ENCODE measurements at regions of chr2 and their contacts with region 1.

Region 1: GRCh38 chr2:234500394-234501006 is 3.6 kb upstream of the ARL4C start:
- DNase-seq: peak; percentile 73 to 85 (median 78)
- H3K4me3 ChIP-seq: peak overlapping the region in 1 of 2 donors; percentile 9
- H3K4me3 Mint-ChIP-seq: peak overlapping the region; percentile 57 to 91 (median 83)
- H3K27ac ChIP-seq: peak overlapping the region; percentile 77
- H3K27ac Mint-ChIP-seq: peak overlapping the region; percentile 81 to 97 (median 94)
- H3K4me1 ChIP-seq: peaks cover 32% of the 10 kb centered on the region
- H3K4me1 Mint-ChIP-seq: peaks cover 26 to 41% (median 30%) of the 10 kb centered on the region in 4 donors
- H3K27me3 ChIP-seq: no peaks in the 10 kb centered on the region
- H3K27me3 Mint-ChIP-seq: no peaks in the 10 kb centered on the region

Region 2: GRCh38 chr2:233404222-233404621 is 1096.3 kb before region 1 on chr2:
- CTCF ChIA-PET with region 1: no interaction called
- POLR2A ChIA-PET with region 1: no interaction called
- intact Hi-C with region 1: loop called (anchors 5 kb)
- DNase-seq: peak; percentile 74 to 78 (median 75)
- H3K4me3 ChIP-seq: no peak overlapping the region
- H3K4me3 Mint-ChIP-seq: peak overlapping the region in 2 of 8 donors; percentile 1
- H3K27ac ChIP-seq: no peak overlapping the region
- H3K27ac Mint-ChIP-seq: peak overlapping the region; percentile 14 to 91 (median 77)
- H3K4me1 ChIP-seq: peaks cover 44% of the 10 kb centered on the region
- H3K4me1 Mint-ChIP-seq: peaks cover 40 to 77% (median 58%) of the 10 kb centered on the region in 4 donors
- H3K27me3 ChIP-seq: no peaks in the 10 kb centered on the region
- H3K27me3 Mint-ChIP-seq: no peaks in the 10 kb centered on the region

Region 3: DNA sequence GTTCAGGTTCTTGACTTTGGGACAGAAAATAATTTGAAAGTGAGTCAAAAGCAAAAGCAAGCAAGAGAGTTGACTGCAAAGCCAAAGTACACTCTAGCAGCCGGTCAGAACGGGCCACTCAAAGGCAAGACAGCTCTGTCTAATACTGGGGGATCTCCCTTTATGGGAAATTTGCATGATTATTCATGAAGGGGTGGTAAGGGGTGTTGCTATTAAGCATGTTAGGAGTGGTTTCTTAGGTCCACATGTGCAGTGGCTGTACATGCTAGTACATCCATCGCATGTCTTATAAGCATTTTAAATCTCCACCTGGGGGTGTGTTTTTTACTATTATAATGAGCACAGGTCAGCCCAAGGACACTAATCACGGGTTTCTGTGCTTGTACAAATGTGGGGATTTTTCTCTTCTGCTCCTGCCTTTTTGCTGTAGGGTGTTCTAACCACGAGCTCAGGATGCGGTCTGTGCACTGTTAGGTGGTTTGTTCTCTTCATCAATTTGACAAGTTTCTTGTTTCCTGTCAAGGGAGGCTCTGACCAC is 510.2 kb before region 1 on chr2:
- CTCF ChIA-PET with region 1: interaction called, 10 read pairs
- POLR2A ChIA-PET with region 1: interaction called, 34 read pairs
- intact Hi-C with region 1: loop called (anchors 5 kb)
- DNase-seq: peak; percentile 82 to 90 (median 87)
- H3K4me3 ChIP-seq: peak overlapping the region in 1 of 2 donors; percentile 16
- H3K4me3 Mint-ChIP-seq: peak overlapping the region in 7 of 8 donors; percentile 57 to 84 (median 64)
- H3K27ac ChIP-seq: peak overlapping the region; percentile 32
- H3K27ac Mint-ChIP-seq: peak overlapping the region; percentile 21 to 96 (median 87)
- H3K4me1 ChIP-seq: peaks cover 65% of the 10 kb centered on the region
- H3K4me1 Mint-ChIP-seq: peaks cover 47 to 70% (median 60%) of the 10 kb centered on the region in 4 donors
- H3K27me3 ChIP-seq: no peaks in the 10 kb centered on the region
- H3K27me3 Mint-ChIP-seq: no peaks in the 10 kb centered on the region

Region 4: GRCh38 chr2:234135720-234136221 is 364.7 kb before region 1 on chr2:
- CTCF ChIA-PET with region 1: interaction called, 100 read pairs
- POLR2A ChIA-PET with region 1: interaction called, 16 read pairs
- intact Hi-C with region 1: loop called (anchors 1 kb)
- DNase-seq: peak; percentile 31 to 51 (median 45)
- H3K4me3 ChIP-seq: no peak overlapping the region
- H3K4me3 Mint-ChIP-seq: peak overlapping the region in 4 of 8 donors; percentile 9 to 43 (median 27)
- H3K27ac ChIP-seq: no peak overlapping the region
- H3K27ac Mint-ChIP-seq: peak overlapping the region; percentile 16 to 78 (median 57)
- H3K4me1 ChIP-seq: peaks cover 28% of the 10 kb centered on the region
- H3K4me1 Mint-ChIP-seq: peaks cover 20 to 46% (median 28%) of the 10 kb centered on the region in 4 donors
- H3K27me3 ChIP-seq: no peaks in the 10 kb centered on the region
- H3K27me3 Mint-ChIP-seq: no peaks in the 10 kb centered on the region

Region 5: DNA sequence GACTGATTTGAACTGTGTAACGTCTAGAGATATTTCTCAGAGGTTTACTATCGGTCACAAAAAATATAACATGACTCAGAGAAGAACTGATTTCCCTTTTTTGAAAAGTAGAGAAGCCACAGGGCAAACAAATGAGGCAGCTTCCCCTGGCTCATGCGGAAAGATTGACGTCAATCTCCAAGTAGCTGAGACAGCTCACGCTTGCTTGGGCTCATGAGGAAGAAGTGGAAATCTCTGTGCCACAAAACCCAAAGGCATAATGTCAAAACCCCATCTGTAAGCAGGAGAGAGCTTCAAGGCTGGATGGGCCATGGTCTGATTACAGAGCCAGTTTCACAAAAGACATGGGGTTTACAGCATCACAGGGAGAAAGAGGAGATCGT is 191.7 kb before region 1 on chr2:
- CTCF ChIA-PET with region 1: interaction called, 3 read pairs
- POLR2A ChIA-PET with region 1: interaction called, 17 read pairs
- intact Hi-C with region 1: no loop called
- DNase-seq: peak; percentile 77 to 92 (median 83)
- H3K4me3 ChIP-seq: no peak overlapping the region
- H3K4me3 Mint-ChIP-seq: peak overlapping the region in 7 of 8 donors; percentile 56 to 91 (median 76)
- H3K27ac ChIP-seq: peak overlapping the region; percentile 56
- H3K27ac Mint-ChIP-seq: peak overlapping the region; percentile 86 to 99 (median 98)
- H3K4me1 ChIP-seq: peaks cover 32% of the 10 kb centered on the region
- H3K4me1 Mint-ChIP-seq: peaks cover 36 to 53% (median 43%) of the 10 kb centered on the region in 4 donors
- H3K27me3 ChIP-seq: no peaks in the 10 kb centered on the region
- H3K27me3 Mint-ChIP-seq: no peaks in the 10 kb centered on the region

Region 6: DNA sequence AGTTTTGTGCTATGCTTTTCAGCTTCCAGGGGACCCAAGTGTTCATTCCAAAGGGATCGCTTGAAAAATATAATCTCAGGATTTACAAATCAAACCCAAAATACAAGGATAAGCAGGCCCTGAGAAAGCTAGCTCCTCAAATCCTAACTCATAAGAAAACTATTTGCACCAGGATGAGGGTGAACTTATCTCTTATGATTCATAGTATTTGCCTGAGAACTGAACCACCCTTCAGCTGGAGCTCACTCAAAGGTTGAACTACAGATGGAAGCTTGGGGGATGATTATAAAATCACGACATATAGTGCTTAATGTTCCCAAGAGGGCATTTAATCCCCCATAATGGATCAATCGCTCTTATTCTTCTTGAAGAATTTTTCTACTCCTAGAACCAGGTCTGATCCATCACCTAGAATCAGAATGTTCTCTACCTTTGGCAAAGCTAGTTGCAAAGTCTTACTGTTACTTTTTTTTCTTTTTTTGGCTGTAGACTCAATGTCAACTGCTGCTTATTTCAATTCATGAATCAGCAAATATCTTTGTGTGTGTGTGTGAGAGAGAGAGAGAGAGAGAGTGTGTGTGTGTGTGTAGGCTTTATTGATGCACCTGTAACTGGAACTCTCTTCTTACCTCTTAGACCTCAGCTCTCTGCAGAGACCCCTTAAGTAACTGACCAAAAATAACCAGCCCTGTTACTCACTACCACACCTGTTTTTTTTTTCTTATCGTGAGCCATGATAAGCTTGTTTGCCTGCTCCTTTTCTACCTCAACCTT is 48.5 kb before region 1 on chr2:
- CTCF ChIA-PET with region 1: interaction called, 18 read pairs
- POLR2A ChIA-PET with region 1: interaction called, 859 read pairs
- intact Hi-C with region 1: no loop called
- DNase-seq: peak in 4 of 5 donors; percentile 38 to 65 (median 55)
- H3K4me3 ChIP-seq: peak overlapping the region; percentile 3 to 83
- H3K4me3 Mint-ChIP-seq: peak overlapping the region; percentile 64 to 97 (median 88)
- H3K27ac ChIP-seq: peak overlapping the region; percentile 90
- H3K27ac Mint-ChIP-seq: peak overlapping the region; percentile 72 to 99 (median 94)
- H3K4me1 ChIP-seq: peaks cover 91% of the 10 kb centered on the region
- H3K4me1 Mint-ChIP-seq: peaks cover 58 to 93% (median 74%) of the 10 kb centered on the region in 4 donors
- H3K27me3 ChIP-seq: no peaks in the 10 kb centered on the region
- H3K27me3 Mint-ChIP-seq: no peaks in the 10 kb centered on the region

Region 7: DNA sequence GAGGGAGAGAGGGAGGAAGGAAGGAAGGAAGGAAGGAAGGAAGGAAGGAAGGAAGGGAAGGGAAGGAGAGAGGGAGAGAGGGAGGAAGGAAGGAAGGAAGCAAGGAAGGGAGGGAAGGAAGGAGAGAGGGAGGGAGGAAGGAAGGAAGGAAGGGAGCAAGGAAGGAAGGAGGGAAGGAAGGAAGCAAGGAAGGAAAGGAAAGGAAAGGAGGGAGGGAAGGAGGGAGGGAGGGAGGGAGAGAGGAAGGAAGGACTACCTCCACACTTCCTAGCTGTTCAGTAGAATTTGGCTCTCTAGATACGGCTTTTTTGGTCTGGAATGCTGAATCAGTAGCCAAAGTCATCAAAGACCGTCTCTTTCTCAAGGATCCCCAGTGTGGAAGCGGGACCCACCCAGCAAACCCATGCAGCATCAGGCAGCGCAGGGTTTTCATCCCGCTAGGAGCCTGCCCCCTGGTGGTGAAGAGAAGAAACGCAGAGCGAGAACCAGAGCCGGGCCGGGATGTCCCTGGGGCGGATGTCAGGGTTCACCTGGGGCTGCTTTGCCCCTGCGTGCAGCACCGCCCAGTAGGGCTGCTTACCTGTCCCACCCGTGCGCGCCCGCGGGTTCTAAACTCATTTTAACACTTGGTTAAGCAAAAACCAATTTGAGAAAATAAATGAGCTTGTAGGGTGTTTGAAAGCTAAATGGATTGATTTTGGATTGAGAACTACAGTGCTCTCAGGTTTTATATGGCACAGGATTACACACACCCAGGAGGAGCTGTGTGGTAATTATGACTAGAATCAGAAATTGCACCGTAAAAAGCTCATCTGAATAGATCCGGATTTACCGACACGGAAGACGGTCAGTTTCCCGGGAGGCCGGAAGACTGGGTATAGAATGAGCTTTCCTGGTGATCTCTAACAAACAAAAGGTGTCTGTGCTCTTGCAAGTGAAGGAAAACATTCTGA is 44.4 kb after region 1 on chr2:
- CTCF ChIA-PET with region 1: interaction called, 16 read pairs
- POLR2A ChIA-PET with region 1: interaction called, 3 read pairs
- intact Hi-C with region 1: no loop called
- DNase-seq: peak; percentile 61 to 73 (median 69)
- H3K4me3 ChIP-seq: no peak overlapping the region
- H3K4me3 Mint-ChIP-seq: no peak overlapping the region
- H3K27ac ChIP-seq: no peak overlapping the region
- H3K27ac Mint-ChIP-seq: peak overlapping the region in 2 of 7 donors; percentile 13 to 53
- H3K4me1 ChIP-seq: peaks cover 7% of the 10 kb centered on the region
- H3K4me1 Mint-ChIP-seq: peaks cover 2 to 13% (median 4%) of the 10 kb centered on the region in 4 donors
- H3K27me3 ChIP-seq: no peaks in the 10 kb centered on the region
- H3K27me3 Mint-ChIP-seq: peaks cover 5 to 14% of the 10 kb centered on the region in 2 donors

Measured in CD4-positive, alpha-beta memory T cell (primary cell).